IMR-90 (cell line): ENCODE measurements at regions of chr1 and their contacts with region 1.

Region 1: DNA sequence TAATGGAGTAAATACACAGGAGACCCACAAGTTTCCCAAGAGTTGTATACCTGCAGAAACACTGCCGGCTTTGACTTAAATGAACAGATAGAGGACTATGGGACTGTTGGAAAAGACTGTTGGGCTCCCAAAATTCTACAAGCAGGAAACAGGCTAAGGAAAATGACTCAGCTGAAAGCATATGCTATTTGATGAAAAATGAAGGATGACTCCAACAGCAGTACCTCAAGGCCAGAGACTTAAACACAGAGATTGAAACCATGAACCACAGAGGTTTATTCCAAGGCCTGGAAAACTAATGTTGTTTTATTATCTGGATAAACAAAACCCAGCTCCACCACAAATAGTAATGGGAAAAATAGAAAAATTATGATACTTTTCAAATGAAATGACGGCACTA is 187.7 kb downstream of the TNFSF18 start:
- DNase-seq: peak; percentile 34
- ATAC-seq: no peak
- H3K4me3 ChIP-seq: no peak overlapping the region
- H3K27ac ChIP-seq: no peak overlapping the region
- H3K4me1 ChIP-seq: no peaks in the 10 kb centered on the region; the same call in 1 of the 2 replicates
- H3K27me3 ChIP-seq: no peaks in the 10 kb centered on the region
- CTCF ChIP-seq: no peak
- POLR2A ChIP-seq: no peak
- RAD21 ChIP-seq: no peak

Region 2: GRCh38 chr1:172761581-172762025 is 101.4 kb before region 1 on chr1:
- CTCF ChIA-PET with region 1: no interaction called
- POLR2A ChIA-PET with region 1: no interaction called
- dilution Hi-C with region 1: no loop called
- in situ Hi-C with region 1: no loop called
- intact Hi-C with region 1: no loop called
- DNase-seq: peak; percentile 50
- ATAC-seq: peak; percentile 46; the same call in 1 of the 2 replicates
- H3K4me3 ChIP-seq: no peak overlapping the region
- H3K27ac ChIP-seq: no peak overlapping the region
- H3K4me1 ChIP-seq: peaks cover 2% of the 10 kb centered on the region; the same call in 1 of the 2 replicates
- H3K27me3 ChIP-seq: peaks cover 3% of the 10 kb centered on the region; the same call in 1 of the 2 replicates
- CTCF ChIP-seq: no peak
- POLR2A ChIP-seq: no peak
- RAD21 ChIP-seq: no peak

Region 3: GRCh38 chr1:172895050-172895460 is 32.0 kb after region 1 on chr1:
- CTCF ChIA-PET with region 1: no interaction called
- POLR2A ChIA-PET with region 1: no interaction called
- dilution Hi-C with region 1: no loop called
- in situ Hi-C with region 1: no loop called
- intact Hi-C with region 1: loop called (anchors 5 kb)
- DNase-seq: peak; percentile 64
- ATAC-seq: peak; percentile 52
- H3K4me3 ChIP-seq: peak overlapping the region; percentile 16; the same call in 1 of the 2 replicates
- H3K27ac ChIP-seq: no peak overlapping the region
- H3K4me1 ChIP-seq: peaks cover 6% of the 10 kb centered on the region
- H3K27me3 ChIP-seq: no peaks in the 10 kb centered on the region
- CTCF ChIP-seq: no peak
- POLR2A ChIP-seq: no peak
- RAD21 ChIP-seq: no peak

Region 4: DNA sequence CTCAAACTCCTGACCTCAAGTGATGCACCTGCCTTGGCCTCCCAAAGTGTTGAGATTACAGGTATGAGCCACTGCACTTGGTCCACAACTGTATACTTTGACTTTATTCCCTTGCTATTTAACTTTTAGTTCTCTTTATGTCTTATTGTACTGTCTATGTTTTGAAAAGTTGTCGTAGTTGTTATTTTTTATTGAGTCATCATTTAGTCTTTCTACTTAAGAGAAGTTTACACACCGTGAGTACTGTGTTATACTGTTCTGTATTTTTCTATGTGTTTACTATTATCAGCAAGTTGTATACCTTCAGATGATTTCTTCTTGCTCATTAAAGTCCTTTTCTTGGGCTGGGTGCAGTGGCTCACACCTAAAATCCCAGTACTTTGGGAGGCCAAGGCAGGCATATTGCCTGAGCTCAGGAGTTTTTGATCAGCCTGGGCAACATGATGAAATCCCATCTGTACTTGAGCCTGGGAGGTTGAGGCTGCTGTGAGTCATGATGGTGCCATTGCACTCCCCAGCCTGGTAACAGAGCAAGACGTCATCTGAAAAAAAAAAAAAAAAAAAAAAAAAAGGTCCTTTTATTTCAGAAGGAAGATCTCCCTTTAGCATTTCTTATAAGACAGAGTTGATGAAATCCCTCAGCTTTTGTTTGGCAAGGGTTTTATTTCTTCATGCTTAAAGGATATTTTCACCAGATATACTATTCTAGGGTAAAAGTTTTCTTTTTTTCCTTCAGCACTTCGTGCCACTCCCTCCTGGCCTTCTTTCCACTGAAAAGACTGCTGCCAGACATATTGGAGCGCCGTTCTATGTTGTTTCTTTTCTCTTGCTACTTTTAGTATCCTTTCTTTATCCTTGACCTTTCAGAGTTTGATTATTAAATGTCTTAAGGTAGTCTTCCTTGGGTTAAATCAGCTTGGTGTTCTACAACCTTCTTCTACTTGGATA is 140.1 kb after region 1 on chr1:
- CTCF ChIA-PET with region 1: no interaction called
- POLR2A ChIA-PET with region 1: no interaction called
- dilution Hi-C with region 1: no loop called
- in situ Hi-C with region 1: no loop called
- intact Hi-C with region 1: no loop called
- DNase-seq: peak; percentile 80
- ATAC-seq: peak; percentile 71
- H3K4me3 ChIP-seq: no peak overlapping the region
- H3K27ac ChIP-seq: no peak overlapping the region
- H3K4me1 ChIP-seq: peaks cover 4% of the 10 kb centered on the region; the same call in 1 of the 2 replicates
- H3K27me3 ChIP-seq: no peaks in the 10 kb centered on the region
- CTCF ChIP-seq: no peak
- POLR2A ChIP-seq: no peak
- RAD21 ChIP-seq: no peak